HepG2 (cell line): ENCODE measurements at regions of chr3 and their contacts with region 1.

Region 1: DNA sequence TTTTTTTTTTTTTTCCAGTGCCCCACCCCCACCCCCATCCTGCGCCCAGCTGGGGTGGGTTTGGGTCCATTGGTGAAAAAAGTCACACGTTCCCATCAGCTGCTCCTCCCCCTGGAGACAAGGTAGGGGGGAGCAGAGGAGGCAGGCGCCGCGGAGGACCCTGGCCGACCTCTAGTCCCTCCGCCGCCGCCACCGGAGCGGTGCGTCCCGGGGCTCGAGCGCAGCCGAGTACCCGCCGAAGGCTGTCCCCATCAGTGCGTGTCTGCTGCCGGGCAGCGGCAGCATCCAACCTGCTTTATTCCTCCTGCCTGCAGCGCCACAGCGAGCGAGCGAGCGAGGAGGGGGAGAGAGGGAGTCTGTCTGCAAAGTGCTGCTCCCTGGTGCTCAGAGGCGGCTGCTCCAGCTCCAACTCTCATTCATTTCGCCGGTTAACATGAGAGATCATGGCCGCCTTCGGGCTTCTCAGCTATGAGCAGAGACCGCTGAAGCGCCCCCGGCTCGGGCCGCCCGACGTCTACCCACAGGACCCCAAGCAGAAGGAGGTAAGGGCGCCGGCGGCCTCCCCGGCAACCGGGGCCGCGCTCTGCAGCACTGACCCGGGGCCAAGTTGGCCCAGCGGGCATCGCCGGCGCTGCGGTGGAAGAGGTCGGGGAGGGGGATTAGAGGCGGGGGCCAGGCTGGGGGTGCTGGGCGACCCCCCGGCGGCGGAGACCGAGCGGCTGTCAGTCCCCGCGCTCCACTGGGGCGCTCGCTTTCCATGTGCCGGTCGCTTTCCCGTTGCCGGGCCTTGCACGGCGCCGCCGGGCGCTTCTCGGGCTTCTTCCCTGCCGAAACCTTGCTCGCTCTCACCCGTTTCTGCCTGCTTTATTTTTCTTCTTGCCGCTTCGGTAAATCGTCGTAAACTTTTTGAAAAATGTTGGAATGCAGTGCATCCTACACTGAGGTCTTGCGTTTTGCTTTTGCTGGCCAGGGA is 1.3 kb downstream of the MED12L start:
- DNase-seq: peak; percentile 70
- ATAC-seq: peak; percentile 95
- H3K4me3 ChIP-seq: peak overlapping the region; percentile 42 to 68 (median 49)
- H3K27ac ChIP-seq: no peak overlapping the region
- H3K4me1 ChIP-seq: peaks cover 12% of the 10 kb centered on the region
- H3K27me3 ChIP-seq: peaks cover 9 to 36% of the 10 kb centered on the region in 2 experiments
- CTCF ChIP-seq: peak; percentile 64
- EP300 ChIP-seq: no peak
- POLR2A ChIP-seq: no peak
- RAD21 ChIP-seq: peak; percentile 61

Region 2: DNA sequence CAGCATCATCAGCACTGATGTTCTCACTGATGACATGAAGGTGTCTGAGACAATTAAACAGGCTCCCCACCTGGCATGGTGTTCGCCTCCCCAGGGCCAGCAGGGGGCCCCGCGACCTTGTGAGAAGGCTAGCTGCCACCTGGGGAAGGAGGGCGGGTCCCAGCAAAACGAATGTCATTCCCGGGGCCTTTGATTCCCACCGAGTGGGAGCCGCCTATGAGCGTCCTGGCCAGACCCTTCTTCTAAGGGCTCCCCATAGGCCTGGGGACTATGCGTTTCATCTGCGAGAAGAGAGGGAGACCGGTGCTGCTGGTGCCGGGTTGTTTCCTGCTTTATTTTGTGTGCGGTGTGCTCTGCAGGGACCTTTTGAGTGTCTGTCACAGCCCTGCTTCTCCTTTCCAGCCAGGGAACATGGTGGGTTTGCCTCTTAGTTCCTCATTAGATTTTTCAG is 161.0 kb before region 1 on chr3:
- CTCF ChIA-PET with region 1: interaction called, 3 read pairs
- POLR2A ChIA-PET with region 1: no interaction called
- in situ Hi-C with region 1: no loop called
- intact Hi-C with region 1: loop called (anchors 10 kb)
- DNase-seq: peak; percentile 50
- ATAC-seq: peak; percentile 99
- H3K4me3 ChIP-seq: peak overlapping the region in 1 of 3 experiments; percentile 19; a peak in 1 of 6 replicates
- H3K27ac ChIP-seq: no peak overlapping the region
- H3K4me1 ChIP-seq: no peaks in the 10 kb centered on the region
- H3K27me3 ChIP-seq: peaks cover 0 to 15% of the 10 kb centered on the region in 2 experiments; a peak in 2 of 5 replicates
- CTCF ChIP-seq: peak; percentile 73
- EP300 ChIP-seq: no peak
- POLR2A ChIP-seq: no peak
- RAD21 ChIP-seq: peak; percentile 63

Region 3: DNA sequence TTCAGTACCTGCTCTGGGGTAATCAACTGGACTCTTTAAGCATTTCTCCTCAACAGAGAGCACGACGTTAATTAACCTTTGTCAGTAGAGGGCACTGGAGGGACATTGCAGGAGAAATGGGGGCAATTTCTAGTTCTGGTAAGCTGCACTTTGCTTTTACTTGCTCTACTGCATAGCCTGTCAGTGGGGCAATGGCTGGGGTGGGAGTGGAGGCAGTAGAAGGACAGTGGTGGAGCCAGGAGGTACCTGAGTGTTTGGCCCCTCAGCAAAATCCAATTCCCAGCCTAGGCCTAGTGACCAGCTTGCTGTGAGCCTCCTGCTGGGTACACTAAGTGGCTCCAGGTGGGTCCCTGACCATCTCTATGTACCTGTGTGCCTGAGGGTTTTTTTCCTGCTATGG is 19.6 kb before region 1 on chr3:
- CTCF ChIA-PET with region 1: no interaction called
- POLR2A ChIA-PET with region 1: no interaction called
- in situ Hi-C with region 1: no loop called
- intact Hi-C with region 1: loop called (anchors 2 kb)
- DNase-seq: peak; percentile 42
- ATAC-seq: peak; percentile 87
- H3K4me3 ChIP-seq: no peak overlapping the region
- H3K27ac ChIP-seq: no peak overlapping the region
- H3K4me1 ChIP-seq: no peaks in the 10 kb centered on the region
- H3K27me3 ChIP-seq: no peaks in the 10 kb centered on the region
- CTCF ChIP-seq: peak; percentile 72
- EP300 ChIP-seq: no peak
- POLR2A ChIP-seq: no peak
- RAD21 ChIP-seq: no peak